ENCODE measurements at regions of chr1 and their contacts with region 1.

Region 1: GRCh38 chr1:44049839-44050238 is 18.6 kb upstream of the SLC6A9 start:
- DNase-seq: no peak
- ATAC-seq: no peak
- H3K4me3 ChIP-seq: no peak overlapping the region
- H3K4me3 Mint-ChIP-seq: no peak overlapping the region
- H3K27ac ChIP-seq: no peak overlapping the region
- H3K27ac Mint-ChIP-seq: no peak overlapping the region
- H3K4me1 ChIP-seq: no peaks in the 10 kb centered on the region
- H3K4me1 Mint-ChIP-seq: no peaks in the 10 kb centered on the region
- H3K27me3 ChIP-seq: no peaks in the 10 kb centered on the region
- H3K27me3 Mint-ChIP-seq: peaks cover 15% of the 10 kb centered on the region
- CTCF ChIP-seq: no peak

Region 2: DNA sequence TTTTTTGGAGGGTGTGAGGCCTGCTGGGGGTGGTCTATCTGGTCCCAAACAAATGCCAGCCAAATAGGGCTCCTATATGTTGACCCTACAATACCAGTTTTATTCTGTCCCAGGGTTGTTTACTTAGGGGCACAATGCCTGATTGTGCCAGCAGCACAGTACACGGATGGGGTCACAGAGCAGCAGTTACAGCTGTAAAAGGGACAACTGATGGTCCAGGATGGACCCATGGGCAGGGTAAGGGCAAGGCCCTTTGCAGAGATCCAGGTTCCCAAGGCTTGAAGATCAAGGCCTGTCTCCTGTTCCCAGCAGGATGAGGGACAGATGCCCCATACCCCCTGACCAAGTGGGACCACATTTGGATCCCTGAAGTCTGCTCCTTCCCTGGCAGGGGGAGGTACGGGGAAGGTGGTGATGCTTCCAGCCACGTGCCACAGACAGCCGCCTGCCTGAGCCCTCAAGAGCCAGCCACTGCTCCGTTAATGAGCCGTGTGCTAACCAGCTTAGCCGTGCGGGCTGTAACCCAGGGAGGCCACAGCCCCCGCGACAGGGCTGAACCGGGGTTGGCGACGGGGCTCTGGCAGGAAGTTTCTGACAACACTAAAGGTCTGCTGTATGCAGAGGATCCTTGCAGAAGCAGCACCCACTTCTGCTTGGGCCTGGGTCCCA is 36.8 kb before region 1 on chr1:
- CTCF ChIA-PET with region 1: interaction called, 14 read pairs
- POLR2A ChIA-PET with region 1: no interaction called
- intact Hi-C with region 1: no loop called
- DNase-seq: no peak
- ATAC-seq: peak; percentile 42
- H3K4me3 ChIP-seq: no peak overlapping the region
- H3K4me3 Mint-ChIP-seq: no peak overlapping the region
- H3K27ac ChIP-seq: no peak overlapping the region
- H3K27ac Mint-ChIP-seq: no peak overlapping the region
- H3K4me1 ChIP-seq: peaks cover 17% of the 10 kb centered on the region
- H3K4me1 Mint-ChIP-seq: peaks cover 18% of the 10 kb centered on the region
- H3K27me3 ChIP-seq: no peaks in the 10 kb centered on the region
- H3K27me3 Mint-ChIP-seq: no peaks in the 10 kb centered on the region
- CTCF ChIP-seq: no peak